ENCODE measurements at regions of chr6 and their contacts with region 1.

Region 1: DNA sequence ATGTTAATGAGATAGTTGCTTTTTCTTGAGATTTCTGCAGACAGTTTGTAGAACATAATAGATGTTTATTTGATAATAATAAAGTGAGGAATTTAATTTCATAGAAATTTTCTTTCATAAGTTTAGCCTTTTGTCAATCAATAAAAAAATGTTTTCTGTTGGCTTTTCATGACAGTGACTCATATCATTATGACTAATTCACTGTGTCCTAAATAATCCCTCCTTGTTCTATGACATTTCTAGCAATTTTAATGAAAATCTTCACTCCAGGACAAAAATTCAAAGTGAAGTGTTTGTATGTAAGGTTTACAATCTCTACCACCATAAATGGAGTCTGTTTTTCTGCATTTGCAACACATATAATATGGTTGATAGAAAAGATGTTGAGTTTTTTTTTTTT is 109.9 kb downstream of the UTRN start:
- DNase-seq: no peak
- ATAC-seq: no peak
- H3K4me3 ChIP-seq: no peak overlapping the region
- H3K4me3 Mint-ChIP-seq: no peak overlapping the region
- H3K27ac ChIP-seq: no peak overlapping the region
- H3K27ac Mint-ChIP-seq: no peak overlapping the region
- H3K4me1 ChIP-seq: peaks cover 13% of the 10 kb centered on the region
- H3K4me1 Mint-ChIP-seq: peaks cover 58% of the 10 kb centered on the region
- H3K27me3 ChIP-seq: no peaks in the 10 kb centered on the region
- H3K27me3 Mint-ChIP-seq: no peaks in the 10 kb centered on the region
- CTCF ChIP-seq: no peak

Region 2: DNA sequence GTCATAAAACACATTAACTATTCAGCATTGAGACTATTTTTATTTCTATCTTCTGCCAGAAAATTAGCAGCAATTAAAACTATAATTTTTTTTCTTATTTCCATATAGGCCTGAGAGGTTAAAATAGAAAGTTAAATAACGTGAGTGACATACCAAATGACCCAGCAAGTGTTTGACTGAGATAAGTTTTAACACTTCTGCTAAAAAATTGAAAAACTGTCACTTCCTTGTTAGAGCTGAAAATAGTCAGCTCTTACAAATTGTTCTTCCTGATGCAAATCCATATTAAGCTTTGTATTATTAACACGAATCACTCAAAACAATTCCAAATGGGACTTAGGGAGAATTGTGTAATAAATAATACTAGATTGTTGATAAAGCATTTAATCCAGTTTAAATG is 271.2 kb before region 1 on chr6:
- CTCF ChIA-PET with region 1: no interaction called
- POLR2A ChIA-PET with region 1: no interaction called
- intact Hi-C with region 1: no loop called
- DNase-seq: no peak
- ATAC-seq: no peak
- H3K4me3 ChIP-seq: no peak overlapping the region
- H3K4me3 Mint-ChIP-seq: no peak overlapping the region
- H3K27ac ChIP-seq: peak overlapping the region in 1 of 2 experiments; percentile 13
- H3K27ac Mint-ChIP-seq: no peak overlapping the region
- H3K4me1 ChIP-seq: no peaks in the 10 kb centered on the region
- H3K4me1 Mint-ChIP-seq: no peaks in the 10 kb centered on the region
- H3K27me3 ChIP-seq: no peaks in the 10 kb centered on the region
- H3K27me3 Mint-ChIP-seq: peaks cover 2% of the 10 kb centered on the region
- CTCF ChIP-seq: no peak

Region 3: DNA sequence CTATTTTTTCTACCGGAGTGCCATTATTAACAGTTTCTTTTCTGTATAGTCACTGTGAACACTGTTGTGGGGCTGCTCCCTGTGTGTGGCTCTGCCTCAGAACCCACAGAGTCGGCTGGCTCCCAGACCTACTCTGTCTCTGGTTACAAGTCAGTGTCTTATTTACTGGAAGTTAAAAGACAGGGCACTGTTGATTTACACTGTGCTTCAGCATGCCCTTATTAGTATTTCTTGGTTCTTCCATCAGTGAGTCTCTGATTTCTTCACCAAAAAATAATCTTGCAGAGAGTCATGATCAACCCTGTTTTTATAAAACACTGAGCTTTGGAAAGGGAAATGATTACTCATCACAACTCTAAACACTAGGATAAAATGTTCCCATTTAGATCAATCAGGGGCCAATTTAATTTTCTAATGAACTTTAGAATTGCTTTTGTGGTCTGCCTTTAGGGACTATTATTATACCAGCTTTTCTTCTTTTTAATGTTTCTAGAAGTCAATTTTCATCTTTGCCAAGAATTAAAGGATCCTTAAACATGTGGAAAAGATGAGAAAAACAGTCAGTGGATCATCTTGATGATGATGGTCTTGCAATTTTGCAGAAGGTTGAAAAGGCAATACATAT is 17.3 kb before region 1 on chr6:
- CTCF ChIA-PET with region 1: no interaction called
- POLR2A ChIA-PET with region 1: interaction called, 6 read pairs
- intact Hi-C with region 1: loop called in 1 of 2 experiments (anchors 2 kb)
- DNase-seq: no peak
- ATAC-seq: peak; percentile 44
- H3K4me3 ChIP-seq: no peak overlapping the region
- H3K4me3 Mint-ChIP-seq: no peak overlapping the region
- H3K27ac ChIP-seq: no peak overlapping the region
- H3K27ac Mint-ChIP-seq: peak overlapping the region; percentile 6
- H3K4me1 ChIP-seq: peaks cover 18% of the 10 kb centered on the region
- H3K4me1 Mint-ChIP-seq: peaks cover 67% of the 10 kb centered on the region
- H3K27me3 ChIP-seq: no peaks in the 10 kb centered on the region
- H3K27me3 Mint-ChIP-seq: no peaks in the 10 kb centered on the region
- CTCF ChIP-seq: no peak